ENCODE measurements at regions of chr1 and their contacts with region 1.

Region 1: DNA sequence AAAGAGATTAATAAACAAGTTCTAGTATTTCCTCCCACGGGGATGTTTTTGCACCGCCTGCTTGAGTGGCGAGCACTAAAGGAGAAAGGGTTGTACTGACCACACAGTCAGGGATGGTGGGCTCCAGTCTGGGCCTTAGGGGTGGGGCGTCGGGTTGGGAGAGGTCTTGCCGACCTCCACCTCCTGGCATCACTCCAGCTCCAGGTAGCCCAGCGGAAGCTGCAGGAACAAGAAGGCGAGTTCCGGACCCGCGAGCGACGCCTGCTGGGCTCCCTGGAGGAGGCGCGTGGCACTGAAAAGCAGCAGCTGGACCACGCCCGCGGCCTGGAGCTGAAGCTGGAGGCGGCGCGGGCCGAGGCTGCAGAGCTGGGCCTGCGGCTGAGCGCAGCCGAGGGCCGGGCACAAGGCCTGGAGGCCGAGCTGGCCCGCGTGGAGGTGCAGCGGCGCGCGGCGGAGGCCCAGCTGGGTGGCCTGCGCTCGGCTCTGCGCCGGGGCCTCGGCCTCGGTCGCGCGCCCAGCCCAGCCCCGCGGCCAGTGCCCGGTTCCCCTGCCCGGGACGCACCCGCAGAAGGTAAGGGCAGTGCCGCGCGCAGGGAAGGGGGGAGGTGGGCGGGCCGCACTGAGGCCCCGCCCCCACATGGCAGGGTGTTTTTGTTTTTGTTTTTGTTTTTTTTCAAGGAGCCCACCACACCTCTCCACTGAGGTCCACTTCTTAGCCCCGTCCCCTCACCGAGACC is 19.7 kb downstream of the MFAP2 start:
- DNase-seq: peak; percentile 72
- ATAC-seq: peak; percentile 91
- H3K4me3 ChIP-seq: peak overlapping the region; percentile 35 to 54
- H3K27ac ChIP-seq: peak overlapping the region; percentile 84
- H3K4me1 ChIP-seq: peaks cover 12 to 17% of the 10 kb centered on the region in 2 experiments
- H3K27me3 ChIP-seq: no peaks in the 10 kb centered on the region
- CTCF ChIP-seq: peak; percentile 63 to 85 (median 66)
- POLR2A ChIP-seq: no peak
- RAD21 ChIP-seq: peak; percentile 38

Region 2: DNA sequence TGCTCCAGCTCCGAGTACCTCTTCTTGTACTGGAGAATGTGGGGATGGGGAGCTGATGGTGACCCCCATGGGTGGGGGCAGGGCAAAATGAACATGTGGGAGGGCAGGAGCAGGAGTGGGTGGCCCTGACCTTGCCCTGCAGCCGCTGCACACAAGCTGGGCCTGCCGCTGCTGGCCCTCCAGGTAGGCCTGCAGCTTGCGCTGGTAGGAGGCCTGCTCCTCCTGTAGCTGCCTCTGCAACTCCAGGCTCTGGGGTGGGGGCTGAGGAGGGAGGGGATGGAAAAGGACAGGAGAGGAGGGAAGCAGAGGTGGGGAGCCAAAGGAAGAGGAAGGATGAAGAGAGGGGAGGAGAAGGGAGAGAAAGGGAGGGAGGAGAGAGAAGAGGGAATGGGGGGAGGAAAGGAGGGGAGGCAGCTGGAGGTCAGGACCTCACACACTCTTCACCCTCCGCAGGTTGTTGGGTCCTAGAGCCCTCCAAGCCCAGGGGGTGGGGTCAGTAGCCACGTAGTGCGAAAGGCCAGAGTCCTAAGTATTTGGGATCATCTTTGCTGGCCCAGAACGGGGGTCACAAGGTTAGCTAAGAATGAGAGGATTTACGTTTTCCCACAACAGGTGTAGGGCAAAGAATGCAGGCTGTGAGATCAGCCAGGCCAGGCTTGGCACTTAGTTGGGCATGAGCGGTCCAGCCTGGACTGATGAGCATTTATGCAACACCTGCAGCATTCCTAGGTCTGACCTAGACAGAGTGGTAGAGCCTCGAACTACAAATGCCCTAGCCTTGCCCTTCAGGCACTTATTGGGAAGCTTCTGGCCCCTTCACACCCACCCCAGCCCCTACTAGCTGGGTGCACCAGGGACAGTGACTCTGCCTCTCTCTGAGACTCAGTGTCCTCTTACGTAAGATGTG is 469.4 kb before region 1 on chr1:
- CTCF ChIA-PET with region 1: no interaction called
- POLR2A ChIA-PET with region 1: no interaction called
- RAD21 ChIA-PET with region 1: no interaction called
- intact Hi-C with region 1: no loop called
- DNase-seq: no peak
- ATAC-seq: no peak
- H3K4me3 ChIP-seq: no peak overlapping the region
- H3K27ac ChIP-seq: no peak overlapping the region
- H3K4me1 ChIP-seq: peaks cover 0 to 2% of the 10 kb centered on the region in 2 experiments; a peak in 1 of 4 replicates
- H3K27me3 ChIP-seq: no peaks in the 10 kb centered on the region
- CTCF ChIP-seq: no peak
- POLR2A ChIP-seq: no peak
- RAD21 ChIP-seq: no peak

Region 3: DNA sequence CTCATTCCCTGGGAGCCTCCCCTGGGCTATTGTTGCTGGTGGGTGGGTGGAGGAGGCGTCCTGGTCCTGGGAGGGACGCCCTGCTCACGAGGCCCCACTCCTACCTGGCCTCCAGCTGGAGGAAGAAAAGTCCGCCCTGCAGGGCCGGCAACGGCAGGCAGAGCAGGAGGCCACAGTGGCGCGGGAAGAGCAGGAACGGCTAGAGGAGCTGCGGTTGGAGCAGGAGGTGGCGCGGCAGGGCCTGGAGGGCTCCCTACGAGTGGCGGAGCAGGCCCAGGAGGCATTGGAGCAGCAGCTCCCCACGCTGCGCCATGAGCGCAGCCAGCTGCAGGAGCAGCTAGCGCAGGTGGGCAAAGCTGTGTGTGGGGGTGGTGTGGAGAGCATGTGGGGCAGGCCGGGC is 14.1 kb before region 1 on chr1:
- CTCF ChIA-PET with region 1: interaction called, 23 read pairs
- POLR2A ChIA-PET with region 1: interaction called, 3 read pairs
- RAD21 ChIA-PET with region 1: no interaction called
- intact Hi-C with region 1: no loop called
- DNase-seq: no peak
- ATAC-seq: no peak
- H3K4me3 ChIP-seq: no peak overlapping the region
- H3K27ac ChIP-seq: no peak overlapping the region
- H3K4me1 ChIP-seq: no peaks in the 10 kb centered on the region; a peak in 1 of 4 replicates
- H3K27me3 ChIP-seq: no peaks in the 10 kb centered on the region
- CTCF ChIP-seq: no peak
- POLR2A ChIP-seq: no peak
- RAD21 ChIP-seq: no peak

Region 4: GRCh38 chr1:17011439-17012307 is 50.9 kb after region 1 on chr1 and contains the start of gene ATP13A2:
- CTCF ChIA-PET with region 1: no interaction called
- POLR2A ChIA-PET with region 1: no interaction called
- RAD21 ChIA-PET with region 1: no interaction called
- intact Hi-C with region 1: loop called (anchors 5 kb)
- DNase-seq: peak; percentile 67
- ATAC-seq: peak; percentile 97
- H3K4me3 ChIP-seq: peak within 1 kb of the TSS; percentile 81 to 94
- H3K27ac ChIP-seq: peak within 1 kb of the TSS; percentile 70; the same call in 1 of the 2 replicates
- H3K4me1 ChIP-seq: peaks cover 17 to 40% of the 10 kb centered on the region in 2 experiments
- H3K27me3 ChIP-seq: no peaks in the 10 kb centered on the region
- CTCF ChIP-seq: no peak
- POLR2A ChIP-seq: peak; percentile 51
- RAD21 ChIP-seq: no peak
- total RNA-seq, gene ATP13A2: 60.5 TPM